H1 (cell line): ENCODE measurements at regions of chr4 and their contacts with region 1.

Region 1: GRCh38 chr4:129362674-129363274 is 266.8 kb downstream of the C4orf33 start:
- DNase-seq: peak in 1 of 2 experiments; percentile 54
- H3K4me3 ChIP-seq: no peak overlapping the region
- H3K27ac ChIP-seq: no peak overlapping the region
- H3K4me1 ChIP-seq: peaks cover 0 to 5% (median 1%) of the 10 kb centered on the region in 4 experiments; a peak in 2 of 7 replicates
- H3K27me3 ChIP-seq: peaks cover 0 to 2% (median 0%) of the 10 kb centered on the region in 4 experiments; a peak in 1 of 7 replicates
- CTCF ChIP-seq: peak in 2 of 3 experiments; percentile 54 to 75; a peak in 2 of 4 replicates
- EP300 ChIP-seq: no peak
- POLR2A ChIP-seq: no peak
- RAD21 ChIP-seq: peak; percentile 90

Region 2: DNA sequence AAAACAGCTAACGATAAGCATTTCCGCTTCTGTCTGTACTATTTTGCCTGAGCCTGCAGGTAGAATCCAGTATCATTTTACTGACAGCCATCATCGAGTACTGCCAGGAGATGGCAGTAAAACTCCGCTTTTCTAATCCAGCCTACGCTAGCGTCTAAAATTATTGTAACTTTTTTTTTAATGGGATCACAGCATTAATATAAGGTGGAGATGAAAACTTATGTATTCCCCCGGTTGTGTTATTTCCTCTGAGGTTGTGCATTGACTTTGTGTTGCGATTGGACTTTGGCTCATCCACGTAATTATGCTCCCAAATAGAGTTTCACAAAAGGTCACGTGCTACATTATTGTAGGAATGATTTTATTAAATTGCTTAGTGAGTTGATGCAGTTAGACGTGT is 18.7 kb before region 1 on chr4:
- CTCF ChIA-PET with region 1: interaction called, 12 read pairs
- POLR2A ChIA-PET with region 1: no interaction called
- DNase-seq: no peak
- H3K4me3 ChIP-seq: no peak overlapping the region
- H3K27ac ChIP-seq: no peak overlapping the region
- H3K4me1 ChIP-seq: no peaks in the 10 kb centered on the region; a peak in 1 of 7 replicates
- H3K27me3 ChIP-seq: no peaks in the 10 kb centered on the region; a peak in 1 of 7 replicates
- CTCF ChIP-seq: peak in 2 of 3 experiments; percentile 61 to 65; a peak in 2 of 4 replicates
- EP300 ChIP-seq: no peak
- POLR2A ChIP-seq: no peak
- RAD21 ChIP-seq: peak; percentile 78 to 85

Region 3: GRCh38 chr4:129377131-129377845 is 14.5 kb after region 1 on chr4:
- CTCF ChIA-PET with region 1: interaction called, 40 read pairs
- POLR2A ChIA-PET with region 1: no interaction called
- DNase-seq: no peak
- H3K4me3 ChIP-seq: no peak overlapping the region
- H3K27ac ChIP-seq: no peak overlapping the region
- H3K4me1 ChIP-seq: no peaks in the 10 kb centered on the region
- H3K27me3 ChIP-seq: no peaks in the 10 kb centered on the region
- CTCF ChIP-seq: no peak
- EP300 ChIP-seq: no peak
- POLR2A ChIP-seq: no peak
- RAD21 ChIP-seq: no peak

Region 4: DNA sequence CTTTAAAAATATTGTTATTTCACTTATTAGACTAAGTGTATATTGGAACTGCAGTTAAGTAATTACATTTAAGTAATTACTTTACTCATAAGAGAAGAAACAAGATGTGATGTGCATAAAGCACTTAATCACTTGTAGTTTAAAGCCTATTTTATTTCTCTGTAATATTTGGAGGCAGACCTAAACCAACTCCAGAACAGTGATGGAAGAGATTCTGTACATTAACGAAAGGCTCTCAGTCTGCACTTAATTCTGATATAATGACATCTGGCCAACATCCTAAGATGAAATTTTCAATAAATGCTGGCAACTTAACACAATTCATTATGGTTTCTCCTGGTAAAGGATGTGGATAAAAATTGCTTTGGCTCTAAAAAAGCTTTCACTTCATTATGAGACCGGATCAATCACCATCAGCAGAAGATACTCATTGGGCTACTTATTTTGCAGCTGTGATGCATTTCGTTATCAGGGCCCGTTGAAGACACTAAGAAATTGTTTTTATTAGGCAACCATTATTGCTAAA is 75.7 kb after region 1 on chr4:
- CTCF ChIA-PET with region 1: no interaction called
- POLR2A ChIA-PET with region 1: no interaction called
- DNase-seq: no peak
- H3K4me3 ChIP-seq: no peak overlapping the region
- H3K27ac ChIP-seq: no peak overlapping the region
- H3K4me1 ChIP-seq: no peaks in the 10 kb centered on the region
- H3K27me3 ChIP-seq: no peaks in the 10 kb centered on the region
- CTCF ChIP-seq: no peak
- EP300 ChIP-seq: no peak
- POLR2A ChIP-seq: no peak
- RAD21 ChIP-seq: no peak

Region 5: DNA sequence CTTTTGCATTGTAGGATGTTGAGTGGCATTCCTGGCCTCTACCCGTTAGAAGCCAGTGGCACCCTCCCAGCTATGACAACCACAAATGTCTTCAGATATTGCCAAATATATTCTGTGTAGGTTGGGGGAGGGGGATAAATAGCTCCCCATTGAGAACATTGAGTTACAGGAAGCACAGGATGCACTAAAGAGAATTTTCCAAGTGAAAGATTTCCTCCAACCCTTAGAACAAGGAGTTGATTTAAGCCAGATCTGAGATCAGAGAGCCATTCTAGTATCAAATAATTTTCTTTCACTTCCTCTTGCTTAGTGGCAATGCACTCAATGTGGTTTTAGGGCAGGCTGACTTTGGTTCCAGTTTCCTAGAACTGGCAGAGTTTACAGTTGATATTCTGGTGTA is 169.8 kb after region 1 on chr4:
- CTCF ChIA-PET with region 1: interaction called, 11 read pairs
- POLR2A ChIA-PET with region 1: no interaction called
- DNase-seq: no peak
- H3K4me3 ChIP-seq: no peak overlapping the region
- H3K27ac ChIP-seq: no peak overlapping the region
- H3K4me1 ChIP-seq: no peaks in the 10 kb centered on the region
- H3K27me3 ChIP-seq: no peaks in the 10 kb centered on the region
- CTCF ChIP-seq: no peak
- EP300 ChIP-seq: no peak
- POLR2A ChIP-seq: no peak
- RAD21 ChIP-seq: no peak

Region 6: DNA sequence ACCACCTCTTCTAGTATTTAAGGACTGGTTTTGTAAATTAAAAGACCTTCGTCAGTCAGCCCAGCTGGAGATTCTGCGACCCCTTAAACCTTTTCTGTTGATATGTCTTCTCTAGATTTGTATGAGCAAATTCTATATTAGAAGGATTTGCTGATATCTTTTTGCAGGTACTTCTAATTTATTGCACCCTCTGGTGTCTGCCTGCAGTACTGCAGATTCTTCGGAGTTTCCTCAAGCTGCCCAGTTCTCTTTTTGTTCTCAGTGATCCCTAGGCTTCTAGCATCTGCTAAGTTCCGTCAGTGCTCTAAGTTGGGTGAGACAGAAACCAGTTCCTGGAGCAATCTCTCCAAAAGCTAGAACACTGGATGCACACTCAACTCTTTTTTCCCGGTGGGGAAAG is 278.4 kb after region 1 on chr4:
- CTCF ChIA-PET with region 1: interaction called, 11 read pairs
- POLR2A ChIA-PET with region 1: no interaction called
- DNase-seq: peak; percentile 23 to 86
- H3K4me3 ChIP-seq: no peak overlapping the region
- H3K27ac ChIP-seq: no peak overlapping the region
- H3K4me1 ChIP-seq: no peaks in the 10 kb centered on the region
- H3K27me3 ChIP-seq: no peaks in the 10 kb centered on the region
- CTCF ChIP-seq: peak in 2 of 3 experiments; percentile 50 to 68; a peak in 2 of 4 replicates
- EP300 ChIP-seq: no peak
- POLR2A ChIP-seq: no peak
- RAD21 ChIP-seq: peak; percentile 58 to 66